ENCODE measurements at regions of chr14 and their contacts with region 1.

Region 1: GRCh38 chr14:71138448-71139293 is 231.4 kb downstream of the PCNX1 start:
- DNase-seq: peak; percentile 9
- ATAC-seq: peak; percentile 85
- H3K4me3 ChIP-seq: no peak overlapping the region
- H3K27ac ChIP-seq: no peak overlapping the region
- H3K4me1 ChIP-seq: peaks cover 17% of the 10 kb centered on the region
- H3K27me3 ChIP-seq: no peaks in the 10 kb centered on the region
- CTCF ChIP-seq: peak; percentile 87 to 90 (median 88)
- EP300 ChIP-seq: no peak
- POLR2A ChIP-seq: no peak
- RAD21 ChIP-seq: peak; percentile 99

Region 2: DNA sequence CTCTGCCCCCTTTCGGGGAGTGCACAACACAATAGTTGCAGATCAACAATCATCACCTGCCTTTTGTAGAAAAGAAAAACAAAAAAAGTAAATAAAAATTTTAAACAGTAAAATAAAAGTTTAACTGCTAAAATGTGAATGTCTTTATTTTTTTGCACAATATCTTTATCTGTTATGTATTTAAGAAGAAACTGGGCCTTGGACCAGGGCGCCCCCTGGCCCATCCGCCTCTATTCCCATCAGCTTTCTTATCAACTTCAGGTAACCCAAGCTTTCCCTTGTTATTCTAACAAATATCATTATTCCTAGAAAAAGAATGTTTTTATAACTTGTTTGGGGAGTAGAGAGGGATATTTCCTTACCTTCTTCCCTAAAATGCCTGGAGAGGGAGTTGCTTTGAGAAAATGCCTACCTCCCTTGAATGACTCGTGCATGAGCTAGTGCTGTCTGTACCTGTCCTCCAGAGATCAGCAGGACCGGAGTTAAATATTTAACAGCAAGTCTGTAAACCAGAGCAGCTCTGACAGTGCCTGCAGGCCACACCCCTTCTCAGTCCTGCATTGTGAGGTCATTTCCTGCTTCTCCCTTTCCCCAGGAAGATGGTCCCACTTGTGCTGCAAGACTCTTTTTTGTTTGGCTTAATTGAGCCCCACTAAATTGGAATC is 600.7 kb after region 1 on chr14:
- CTCF ChIA-PET with region 1: interaction called, 4 read pairs
- POLR2A ChIA-PET with region 1: no interaction called
- RAD21 ChIA-PET with region 1: interaction called, 4 read pairs
- SMC1A ChIA-PET with region 1: interaction called, 15 read pairs
- in situ Hi-C with region 1: no loop called
- intact Hi-C with region 1: no loop called
- DNase-seq: no peak
- ATAC-seq: peak; percentile 39; the same call in 1 of the 3 replicates
- H3K4me3 ChIP-seq: no peak overlapping the region
- H3K27ac ChIP-seq: no peak overlapping the region
- H3K4me1 ChIP-seq: no peaks in the 10 kb centered on the region
- H3K27me3 ChIP-seq: no peaks in the 10 kb centered on the region
- CTCF ChIP-seq: peak in 1 of 3 experiments; percentile 11; a peak in 1 of 6 replicates
- EP300 ChIP-seq: no peak
- POLR2A ChIP-seq: no peak
- RAD21 ChIP-seq: no peak